ENCODE measurements at regions of chr5 and their contacts with region 1.

Region 1: GRCh38 chr5:25763781-25764180 is 1119.0 kb upstream of the CDH10 start:
- DNase-seq: no peak
- H3K4me3 ChIP-seq: no peak overlapping the region
- H3K27ac ChIP-seq: no peak overlapping the region
- H3K4me1 ChIP-seq: no peaks in the 10 kb centered on the region
- H3K27me3 ChIP-seq: no peaks in the 10 kb centered on the region
- CTCF ChIP-seq: no peak

Region 2: GRCh38 chr5:24693609-24694008 is 1070.2 kb before region 1 on chr5:
- CTCF ChIA-PET with region 1: no interaction called
- POLR2A ChIA-PET with region 1: no interaction called
- intact Hi-C with region 1: no loop called
- DNase-seq: no peak
- H3K4me3 ChIP-seq: no peak overlapping the region
- H3K27ac ChIP-seq: no peak overlapping the region
- H3K4me1 ChIP-seq: no peaks in the 10 kb centered on the region
- H3K27me3 ChIP-seq: no peaks in the 10 kb centered on the region
- CTCF ChIP-seq: no peak

Region 3: GRCh38 chr5:25716680-25717079 is 47.1 kb before region 1 on chr5:
- CTCF ChIA-PET with region 1: no interaction called
- POLR2A ChIA-PET with region 1: no interaction called
- intact Hi-C with region 1: no loop called
- DNase-seq: no peak
- H3K4me3 ChIP-seq: no peak overlapping the region
- H3K27ac ChIP-seq: no peak overlapping the region
- H3K4me1 ChIP-seq: no peaks in the 10 kb centered on the region
- H3K27me3 ChIP-seq: no peaks in the 10 kb centered on the region
- CTCF ChIP-seq: no peak

Region 4: DNA sequence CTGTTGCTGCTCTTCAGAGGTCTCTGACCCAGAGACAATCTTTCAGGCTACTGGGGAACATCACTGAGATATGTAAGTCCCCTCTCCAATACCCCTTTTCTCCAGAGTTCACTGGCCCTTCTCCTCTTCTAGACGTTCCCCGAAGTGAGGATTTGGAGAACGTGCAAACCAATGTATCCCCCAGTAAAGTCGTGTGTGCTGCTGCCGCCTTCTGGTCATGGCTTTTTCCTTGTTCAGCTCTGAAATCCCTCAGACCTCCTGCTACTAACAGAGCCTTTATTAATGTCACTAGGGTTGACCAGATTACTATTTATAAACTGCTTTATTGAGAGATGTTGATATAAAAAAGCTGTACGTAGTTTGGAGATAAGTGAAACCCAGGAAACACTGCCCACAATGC is 246.0 kb after region 1 on chr5:
- CTCF ChIA-PET with region 1: no interaction called
- POLR2A ChIA-PET with region 1: no interaction called
- intact Hi-C with region 1: loop called (anchors 5 kb)
- DNase-seq: peak in 1 of 2 experiments; percentile 26
- H3K4me3 ChIP-seq: no peak overlapping the region
- H3K27ac ChIP-seq: no peak overlapping the region
- H3K4me1 ChIP-seq: no peaks in the 10 kb centered on the region
- H3K27me3 ChIP-seq: no peaks in the 10 kb centered on the region
- CTCF ChIP-seq: peak; percentile 29; the same call in 1 of the 2 replicates

Region 5: GRCh38 chr5:26329562-26330189 is 565.9 kb after region 1 on chr5:
- CTCF ChIA-PET with region 1: interaction called, 3 read pairs
- POLR2A ChIA-PET with region 1: no interaction called
- intact Hi-C with region 1: loop called (anchors 1 kb)
- DNase-seq: no peak
- H3K4me3 ChIP-seq: no peak overlapping the region
- H3K27ac ChIP-seq: no peak overlapping the region
- H3K4me1 ChIP-seq: no peaks in the 10 kb centered on the region
- H3K27me3 ChIP-seq: no peaks in the 10 kb centered on the region
- CTCF ChIP-seq: peak; percentile 72

Measured in PC-9 (cell line).